ENCODE measurements at regions of chr6 and their contacts with region 1.

Region 1: GRCh38 chr6:138987640-138988468 is at the start of gene REPS1:
- DNase-seq: peak; percentile 90
- H3K4me3 Mint-ChIP-seq: no peak within 1 kb of the TSS
- H3K27ac Mint-ChIP-seq: peak within 1 kb of the TSS; percentile 97
- H3K4me1 Mint-ChIP-seq: no peaks in the 10 kb centered on the region
- H3K27me3 Mint-ChIP-seq: no peaks in the 10 kb centered on the region
- CTCF ChIP-seq: peak; percentile 96
- total RNA-seq, gene REPS1: 54.8 and 65.3 TPM in 2 replicates

Region 2: DNA sequence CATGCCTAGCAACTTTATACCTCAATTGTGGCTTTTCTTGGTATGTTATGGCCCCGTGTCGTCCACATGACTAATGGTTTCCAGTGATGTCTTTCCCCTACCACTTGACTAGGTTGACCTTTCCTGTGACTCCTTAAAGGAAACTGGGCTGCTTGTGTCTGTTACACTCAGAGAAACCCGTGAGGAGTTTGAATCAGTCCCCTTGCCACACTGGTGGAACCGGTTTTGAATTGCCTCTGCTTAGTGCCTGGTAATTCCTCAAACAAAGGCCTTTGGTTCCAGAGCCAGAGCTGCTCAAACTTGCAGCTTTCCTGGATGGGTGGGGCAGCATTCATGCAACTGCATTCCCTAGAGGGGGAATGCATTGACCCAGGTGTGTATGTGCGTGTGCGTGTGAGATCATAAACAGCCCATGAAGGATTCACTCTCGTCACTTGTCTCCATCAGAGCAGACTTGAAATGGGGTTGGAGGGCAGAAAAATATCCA is 170.0 kb before region 1 on chr6:
- CTCF ChIA-PET with region 1: interaction called, 44 read pairs
- POLR2A ChIA-PET with region 1: interaction called, 28 read pairs
- intact Hi-C with region 1: loop called (anchors 1 kb)
- DNase-seq: no peak
- H3K4me3 Mint-ChIP-seq: no peak overlapping the region
- H3K27ac Mint-ChIP-seq: no peak overlapping the region
- H3K4me1 Mint-ChIP-seq: peaks cover 10% of the 10 kb centered on the region
- H3K27me3 Mint-ChIP-seq: no peaks in the 10 kb centered on the region
- CTCF ChIP-seq: no peak

Region 3: GRCh38 chr6:138891255-138891986 is 96.4 kb before region 1 on chr6:
- CTCF ChIA-PET with region 1: interaction called, 14 read pairs
- POLR2A ChIA-PET with region 1: interaction called, 23 read pairs
- intact Hi-C with region 1: loop called (anchors 2 kb)
- DNase-seq: no peak
- H3K4me3 Mint-ChIP-seq: no peak overlapping the region
- H3K27ac Mint-ChIP-seq: no peak overlapping the region
- H3K4me1 Mint-ChIP-seq: peaks cover 10% of the 10 kb centered on the region
- H3K27me3 Mint-ChIP-seq: no peaks in the 10 kb centered on the region
- CTCF ChIP-seq: no peak

Region 4: DNA sequence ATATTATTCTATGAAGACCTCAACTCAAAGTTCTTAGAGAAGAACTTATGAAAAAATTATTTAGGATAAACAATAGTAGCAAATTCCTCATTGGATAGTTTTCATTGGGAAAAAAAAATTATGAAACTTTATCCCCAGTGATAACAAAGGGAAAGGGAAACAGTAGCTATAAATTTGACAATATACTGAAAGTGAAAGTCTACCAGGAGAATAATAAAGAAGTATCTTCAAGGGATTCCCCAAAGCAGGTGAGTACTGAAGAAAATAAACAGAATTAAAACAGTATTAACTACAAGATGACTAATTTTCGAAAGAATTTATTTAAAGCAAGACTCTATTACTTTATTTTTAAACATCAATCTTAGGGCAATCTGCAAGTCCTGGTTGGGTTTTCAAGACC is 56.2 kb before region 1 on chr6:
- CTCF ChIA-PET with region 1: no interaction called
- POLR2A ChIA-PET with region 1: no interaction called
- intact Hi-C with region 1: no loop called
- DNase-seq: no peak
- H3K4me3 Mint-ChIP-seq: no peak overlapping the region
- H3K27ac Mint-ChIP-seq: no peak overlapping the region
- H3K4me1 Mint-ChIP-seq: no peaks in the 10 kb centered on the region
- H3K27me3 Mint-ChIP-seq: no peaks in the 10 kb centered on the region
- CTCF ChIP-seq: no peak

Region 5: DNA sequence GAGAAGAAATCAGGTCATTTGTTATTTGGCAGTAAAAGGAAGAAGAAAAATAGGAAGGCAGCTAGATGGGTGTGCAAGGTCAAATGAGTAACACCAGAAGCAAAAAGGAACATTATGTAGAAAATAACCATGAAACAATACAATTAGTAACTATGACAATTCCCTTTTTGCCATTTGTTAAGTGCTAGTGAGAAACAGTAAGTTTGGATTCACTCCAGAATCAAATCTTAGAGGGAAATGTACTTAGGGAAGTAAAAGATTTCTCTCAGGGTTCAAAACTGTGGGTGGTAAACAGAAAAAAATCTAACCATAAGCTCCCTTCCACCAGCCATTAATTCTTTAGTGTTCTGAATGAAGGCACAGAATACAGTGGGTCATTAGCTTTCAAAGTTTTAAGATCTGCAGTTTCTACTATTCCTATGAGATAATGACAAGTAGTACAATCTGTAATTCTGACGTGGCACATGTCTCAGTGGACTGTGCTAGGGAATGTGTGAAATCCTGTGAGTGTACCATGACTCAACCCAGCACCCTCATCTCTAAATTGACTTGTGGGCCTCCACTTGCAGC is 16.9 kb before region 1 on chr6:
- CTCF ChIA-PET with region 1: interaction called, 36 read pairs
- POLR2A ChIA-PET with region 1: interaction called, 57 read pairs
- intact Hi-C with region 1: no loop called
- DNase-seq: peak; percentile 89
- H3K4me3 Mint-ChIP-seq: peak overlapping the region; percentile 8
- H3K27ac Mint-ChIP-seq: peak overlapping the region; percentile 79
- H3K4me1 Mint-ChIP-seq: peaks cover 47% of the 10 kb centered on the region
- H3K27me3 Mint-ChIP-seq: no peaks in the 10 kb centered on the region
- CTCF ChIP-seq: no peak

Region 6: DNA sequence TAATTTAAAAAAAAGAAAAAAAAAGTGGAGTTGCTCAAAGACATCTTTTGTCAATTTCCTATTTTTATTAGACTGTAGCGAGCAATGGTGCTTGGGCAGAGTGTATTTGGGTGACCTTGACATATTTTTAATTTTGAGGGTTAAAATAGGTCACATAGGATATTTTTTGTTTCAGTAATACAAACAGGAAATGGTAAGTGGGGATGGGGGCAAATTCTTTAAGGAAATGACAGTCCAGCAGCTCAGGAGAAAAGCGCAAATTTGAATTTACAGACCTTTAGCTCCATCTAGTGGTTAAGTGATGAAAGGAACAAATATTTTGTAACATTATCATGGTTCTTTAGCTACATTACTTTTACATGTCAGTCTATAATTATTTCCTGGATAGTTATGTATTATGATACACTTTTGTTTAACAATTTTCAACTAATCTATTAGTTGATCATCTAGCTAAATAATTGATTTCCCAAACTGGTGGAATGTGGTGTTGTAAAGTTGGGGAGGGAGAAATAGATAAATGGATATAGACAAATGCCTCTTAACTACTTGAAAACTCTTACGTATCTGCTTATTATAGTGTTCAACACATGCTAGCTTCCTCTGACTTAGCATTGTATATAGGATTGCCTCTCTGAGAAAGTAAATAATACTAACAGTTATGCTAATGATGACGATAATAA is 376.6 kb after region 1 on chr6:
- CTCF ChIA-PET with region 1: interaction called, 4 read pairs
- POLR2A ChIA-PET with region 1: interaction called, 4 read pairs
- intact Hi-C with region 1: loop called (anchors 5 kb)
- DNase-seq: peak; percentile 53
- H3K4me3 Mint-ChIP-seq: no peak overlapping the region
- H3K27ac Mint-ChIP-seq: no peak overlapping the region
- H3K4me1 Mint-ChIP-seq: no peaks in the 10 kb centered on the region
- H3K27me3 Mint-ChIP-seq: no peaks in the 10 kb centered on the region
- CTCF ChIP-seq: peak; percentile 66

Measured in MCF 10A (cell line).